SK-N-SH (cell line): ENCODE measurements at regions of chr1 and their contacts with region 1.

Region 1: DNA sequence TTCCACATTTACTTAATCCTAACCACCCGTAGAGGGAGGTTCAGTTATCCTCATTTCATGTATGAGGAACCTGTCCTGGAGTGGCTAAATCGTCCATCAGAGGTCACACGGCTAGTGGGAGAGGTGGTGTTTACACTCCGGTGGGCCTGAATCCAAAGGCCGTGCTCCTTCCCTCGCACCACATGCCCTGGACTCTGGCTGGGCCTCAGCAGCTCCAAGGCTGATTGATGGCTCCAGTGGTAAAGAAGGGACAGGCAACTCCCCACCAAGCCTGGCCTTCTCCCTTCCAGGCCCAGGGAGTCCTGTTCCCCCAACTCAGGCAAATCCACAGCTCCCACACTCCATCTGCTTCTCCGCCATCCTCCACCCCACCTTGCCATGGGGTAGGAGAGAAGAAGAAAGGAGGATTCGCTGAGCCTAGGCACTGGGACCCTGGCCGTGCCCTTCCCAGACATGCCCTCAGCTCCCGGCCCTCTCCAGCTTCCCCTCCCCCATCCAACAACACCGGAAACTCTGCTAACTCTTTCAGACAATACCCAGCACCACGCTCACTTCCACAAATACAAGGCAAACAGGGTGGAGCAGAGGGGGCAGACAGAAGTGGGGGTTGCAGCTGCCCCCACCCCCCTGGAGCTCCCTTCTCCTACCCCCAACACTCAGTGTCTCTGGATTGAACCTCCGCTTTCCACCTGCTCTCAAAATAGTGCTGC is 10.9 kb downstream of the ARHGEF2 start:
- DNase-seq: peak; percentile 17
- H3K4me3 ChIP-seq: no peak overlapping the region
- H3K27ac ChIP-seq: no peak overlapping the region
- H3K4me1 ChIP-seq: peaks cover 7 to 46% of the 10 kb centered on the region in 2 experiments; a peak in 3 of 4 replicates
- H3K27me3 ChIP-seq: no peaks in the 10 kb centered on the region
- CTCF ChIP-seq: no peak
- EP300 ChIP-seq: no peak
- RAD21 ChIP-seq: no peak

Region 2: DNA sequence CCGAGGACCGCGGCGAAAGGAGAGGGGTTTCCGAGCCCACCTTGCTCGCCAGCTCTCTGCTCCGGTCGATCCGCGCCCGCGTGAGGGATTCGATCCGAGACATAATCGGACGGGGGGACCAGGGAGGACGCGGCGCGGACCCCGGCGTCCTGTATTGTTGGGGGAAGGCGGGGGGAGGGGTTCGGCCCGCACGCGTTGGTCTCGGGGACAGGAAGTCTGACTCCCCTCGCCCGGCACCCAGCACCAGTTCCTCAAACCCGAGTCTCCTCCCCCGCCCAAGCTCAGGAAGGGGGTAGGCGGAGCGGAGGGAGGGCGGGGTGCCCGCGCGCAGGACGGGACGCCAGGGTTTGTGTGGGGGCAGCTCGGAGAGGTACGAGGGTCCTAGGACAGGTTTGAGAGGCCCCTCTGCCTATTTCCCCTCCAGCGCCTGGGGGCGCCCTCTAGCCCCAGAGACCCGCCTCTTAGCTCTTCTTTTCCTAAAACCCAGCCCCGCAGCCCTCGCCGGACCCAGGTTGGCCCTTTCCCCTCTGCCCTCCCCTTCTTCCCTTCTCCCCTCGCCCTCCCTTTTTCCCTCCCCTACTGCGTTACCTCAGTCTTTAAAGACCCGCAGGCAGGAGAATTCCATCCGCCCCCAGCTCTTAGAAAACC is 11.0 kb after region 1 on chr1 and contains the start of gene ARHGEF2:
- CTCF ChIA-PET with region 1: interaction called, 12 read pairs
- POLR2A ChIA-PET with region 1: interaction called, 9 read pairs
- DNase-seq: peak; percentile 91
- H3K4me3 ChIP-seq: peak within 1 kb of the TSS; percentile 88 to 91
- H3K27ac ChIP-seq: peak within 1 kb of the TSS; percentile 87 to 93
- H3K4me1 ChIP-seq: peaks cover 42 to 57% of the 10 kb centered on the region in 2 experiments
- H3K27me3 ChIP-seq: no peaks in the 10 kb centered on the region
- CTCF ChIP-seq: peak; percentile 52
- EP300 ChIP-seq: no peak
- RAD21 ChIP-seq: 0 out of 2 replicates have a peak, but pooled peaks have one; percentile 7
- polyA plus RNA-seq, gene ARHGEF2: 32.4 and 50.8 TPM in 2 replicates